ENCODE measurements at regions of chr9 and their contacts with region 1.

Region 1: DNA sequence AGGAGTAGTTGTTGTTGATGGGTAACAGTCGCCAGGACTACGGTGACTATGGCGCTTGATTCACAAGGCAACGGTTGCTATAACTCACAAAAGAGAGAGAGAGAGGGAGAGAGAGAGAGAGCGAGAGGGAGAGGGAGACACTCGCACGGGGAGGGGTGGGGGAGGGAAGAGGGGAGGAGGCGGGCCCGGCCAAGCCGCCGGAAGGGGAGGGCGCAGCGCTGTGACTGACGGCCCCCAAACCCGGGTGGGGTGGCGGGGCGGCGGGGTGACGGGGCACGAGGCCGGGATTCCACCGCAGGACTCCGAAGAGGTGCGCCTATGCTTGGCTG is at the start of gene RFX3:
- DNase-seq: peak; percentile 64

Region 2: GRCh38 chr9:3498691-3499090 is 27.1 kb before region 1 on chr9:
- CTCF ChIA-PET with region 1: no interaction called
- POLR2A ChIA-PET with region 1: interaction called, 22 read pairs
- DNase-seq: no peak

Region 3: GRCh38 chr9:3508521-3509291 is 17.1 kb before region 1 on chr9:
- CTCF ChIA-PET with region 1: no interaction called
- POLR2A ChIA-PET with region 1: interaction called, 24 read pairs
- DNase-seq: peak; percentile 6

Region 4: DNA sequence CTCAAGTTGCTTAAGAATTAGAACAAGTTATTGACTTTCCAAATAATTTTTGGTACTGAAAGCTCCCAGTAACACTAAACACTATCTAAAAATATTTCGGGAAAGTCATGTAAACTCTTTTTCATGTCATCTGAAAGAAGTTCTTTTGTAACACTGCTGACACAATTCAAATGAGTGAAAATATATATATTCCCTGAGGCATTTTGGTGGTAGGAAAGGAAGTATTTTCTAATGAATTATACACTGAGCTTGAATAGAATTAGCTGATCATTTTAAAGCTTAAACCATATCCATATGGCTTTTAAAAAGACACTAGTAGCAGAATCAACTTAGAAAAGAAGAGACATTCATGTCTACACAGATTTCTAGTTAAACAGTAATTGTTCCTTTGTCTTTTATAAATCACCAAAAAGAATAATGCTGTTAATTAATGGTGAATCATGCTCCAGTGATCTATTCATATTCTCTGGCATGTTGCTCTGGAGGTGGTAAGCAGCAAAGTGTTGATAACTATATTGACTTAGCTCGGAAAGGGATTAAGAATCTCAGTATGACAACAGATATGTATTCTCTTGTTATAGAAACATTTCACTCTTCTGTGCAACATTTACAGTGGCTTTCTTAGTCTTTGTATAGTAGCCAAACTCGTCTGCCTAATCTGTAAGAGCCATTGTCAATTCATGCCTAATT is 27.4 kb after region 1 on chr9:
- CTCF ChIA-PET with region 1: no interaction called
- POLR2A ChIA-PET with region 1: no interaction called
- DNase-seq: no peak

Region 5: DNA sequence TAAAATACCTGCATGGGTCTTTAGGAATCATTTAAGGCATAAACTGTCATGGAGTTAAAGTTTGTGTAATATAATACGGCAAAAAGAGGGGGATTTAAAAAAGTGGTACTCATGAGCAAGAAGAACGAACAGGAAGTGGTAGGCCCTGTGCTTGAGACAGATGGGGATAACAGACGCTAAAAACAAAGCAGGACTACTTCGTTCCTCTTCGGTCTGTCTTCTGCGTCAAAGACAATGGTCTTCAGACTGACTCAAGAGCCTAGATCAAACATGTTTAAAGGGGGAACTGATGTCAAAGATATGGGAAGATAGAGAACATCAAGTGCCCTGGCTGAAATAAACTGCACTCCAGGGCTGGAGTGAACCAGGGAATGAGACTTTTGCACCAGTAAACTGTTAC is 59.8 kb after region 1 on chr9:
- CTCF ChIA-PET with region 1: no interaction called
- POLR2A ChIA-PET with region 1: no interaction called
- DNase-seq: no peak

Measured in HEK293T (cell line).